Heart left ventricle (tissue), 16 donors: ENCODE measurements at regions of chr20 and their contacts with region 1.

Region 1: DNA sequence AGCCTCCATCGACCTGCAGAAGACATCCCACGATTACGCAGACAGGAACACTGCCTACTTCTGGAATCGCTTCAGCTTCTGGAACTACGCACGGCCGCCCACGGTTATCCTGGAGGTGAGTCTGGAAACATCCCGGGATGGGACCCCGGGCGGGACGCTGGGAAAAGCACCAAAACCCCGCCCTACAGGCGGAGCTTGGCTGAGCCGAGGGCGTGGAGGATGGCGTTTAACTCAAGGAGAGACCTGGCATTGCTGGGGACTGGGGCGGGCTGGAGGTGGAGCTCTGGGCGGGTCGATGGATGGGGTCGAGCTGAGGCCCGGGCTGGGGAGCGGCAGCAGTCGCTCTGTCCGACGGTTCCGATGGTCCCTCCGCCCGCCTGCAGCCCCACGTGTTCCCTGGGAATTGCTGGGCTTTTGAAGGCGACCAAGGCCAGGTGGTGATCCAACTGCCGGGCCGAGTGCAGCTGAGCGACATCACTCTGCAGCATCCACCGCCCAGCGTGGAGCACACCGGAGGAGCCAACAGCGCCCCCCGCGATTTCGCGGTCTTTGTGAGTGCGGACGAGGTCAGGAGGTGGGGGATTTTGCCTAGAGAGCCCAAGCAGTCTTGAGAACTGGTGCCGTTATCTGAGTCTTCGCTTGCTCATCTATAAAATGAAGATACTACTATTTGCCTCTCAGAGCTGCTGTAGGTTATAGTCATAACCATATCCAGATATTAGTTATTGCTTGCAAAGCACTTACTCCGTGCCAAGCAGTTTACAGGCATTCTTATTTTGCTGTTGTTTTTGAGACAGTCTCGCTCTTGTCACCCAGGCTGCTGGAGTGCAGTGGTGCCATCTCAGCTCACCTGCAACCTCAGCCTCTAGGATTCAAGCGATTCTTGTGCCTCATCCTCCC is 3.8 kb downstream of the SPAG4 start:
- DNase-seq: peak; percentile 76 to 88 (median 79)
- ATAC-seq: peak in 3 of 4 donors; percentile 28 to 51 (median 33)
- H3K4me3 ChIP-seq: peak overlapping the region; percentile 19 to 68 (median 56)
- H3K27ac ChIP-seq: peak overlapping the region in 3 of 12 donors; percentile 10 to 97 (median 88)
- H3K4me1 ChIP-seq: peaks cover 3 to 42% (median 28%) of the 10 kb centered on the region in 12 donors
- H3K27me3 ChIP-seq: no peaks in the 10 kb centered on the region
- CTCF ChIP-seq: peak in 11 of 12 donors; percentile 4 to 36 (median 18)
- POLR2A ChIP-seq: no peak

Region 2: DNA sequence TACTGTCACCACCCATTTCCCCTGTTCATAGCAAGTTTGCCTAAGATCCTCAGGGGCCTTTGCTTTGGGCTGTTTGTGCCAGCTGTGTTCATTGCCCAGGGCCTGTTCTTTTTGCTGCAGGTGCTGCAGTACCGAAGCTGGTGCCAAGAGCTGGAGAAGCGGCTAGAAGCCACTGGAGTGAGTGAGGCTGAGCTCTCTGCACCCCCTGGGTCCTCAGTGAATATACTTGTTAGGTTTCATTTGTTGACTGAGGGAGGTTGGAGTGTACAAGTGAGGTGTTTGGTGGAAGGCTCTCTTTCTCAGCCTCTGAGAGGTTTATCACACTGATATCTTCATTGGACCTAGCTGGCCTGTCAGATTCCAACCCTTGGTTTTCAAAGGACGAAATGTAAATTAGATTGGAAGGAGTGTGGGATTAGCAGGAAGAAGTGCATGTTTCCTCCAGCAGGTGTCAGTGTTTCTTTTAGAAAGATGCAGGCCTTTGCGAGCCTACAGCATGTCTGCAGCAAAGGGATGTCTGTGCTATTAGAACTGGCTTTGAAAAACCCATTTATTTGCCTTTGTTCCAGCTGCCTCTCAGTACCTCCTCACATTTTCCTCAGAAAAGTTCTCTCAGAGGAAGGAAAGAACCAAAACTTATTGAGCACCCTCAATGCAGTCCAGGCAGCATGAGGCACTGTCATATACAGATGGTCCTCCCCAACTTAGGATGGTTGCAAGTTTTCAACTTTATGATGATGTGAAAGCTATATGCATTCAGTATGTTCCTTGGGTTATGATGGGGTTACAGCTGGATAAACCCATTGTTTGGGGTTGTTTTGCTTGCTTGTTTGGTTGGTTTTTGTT is 155.8 kb before region 1 on chr20:
- intact Hi-C with region 1: loop called in 1 of 10 experiments (anchors 10 kb)
- DNase-seq: peak in 4 of 5 donors; percentile 34 to 44 (median 38)
- ATAC-seq: peak; percentile 24 to 79 (median 76)
- H3K4me3 ChIP-seq: no peak overlapping the region
- H3K27ac ChIP-seq: no peak overlapping the region
- H3K4me1 ChIP-seq: peaks cover 0 to 6% (median 0%) of the 10 kb centered on the region in 12 donors
- H3K27me3 ChIP-seq: no peaks in the 10 kb centered on the region
- CTCF ChIP-seq: peak; percentile 67 to 90 (median 78)
- POLR2A ChIP-seq: no peak

Region 3: GRCh38 chr20:35541783-35542588 is 77.5 kb before region 1 on chr20 and contains the start of gene ERGIC3:
- intact Hi-C with region 1: loop called in 1 of 10 experiments (anchors 5 kb)
- DNase-seq: peak; percentile 97 to 98 (median 98)
- ATAC-seq: peak; percentile 98 to 100 (median 100)
- H3K4me3 ChIP-seq: peak within 1 kb of the TSS; percentile 64 to 96 (median 88)
- H3K27ac ChIP-seq: peak within 1 kb of the TSS in 11 of 12 donors; percentile 23 to 83 (median 74)
- H3K4me1 ChIP-seq: peaks cover 0 to 18% (median 12%) of the 10 kb centered on the region in 12 donors
- H3K27me3 ChIP-seq: no peaks in the 10 kb centered on the region
- CTCF ChIP-seq: peak in 5 of 12 donors; percentile 10 to 42 (median 18)
- POLR2A ChIP-seq: peak in 1 of 2 donors; percentile 63
- total RNA-seq, gene ERGIC3: 83.9 to 152 (median 101) TPM

Region 4: DNA sequence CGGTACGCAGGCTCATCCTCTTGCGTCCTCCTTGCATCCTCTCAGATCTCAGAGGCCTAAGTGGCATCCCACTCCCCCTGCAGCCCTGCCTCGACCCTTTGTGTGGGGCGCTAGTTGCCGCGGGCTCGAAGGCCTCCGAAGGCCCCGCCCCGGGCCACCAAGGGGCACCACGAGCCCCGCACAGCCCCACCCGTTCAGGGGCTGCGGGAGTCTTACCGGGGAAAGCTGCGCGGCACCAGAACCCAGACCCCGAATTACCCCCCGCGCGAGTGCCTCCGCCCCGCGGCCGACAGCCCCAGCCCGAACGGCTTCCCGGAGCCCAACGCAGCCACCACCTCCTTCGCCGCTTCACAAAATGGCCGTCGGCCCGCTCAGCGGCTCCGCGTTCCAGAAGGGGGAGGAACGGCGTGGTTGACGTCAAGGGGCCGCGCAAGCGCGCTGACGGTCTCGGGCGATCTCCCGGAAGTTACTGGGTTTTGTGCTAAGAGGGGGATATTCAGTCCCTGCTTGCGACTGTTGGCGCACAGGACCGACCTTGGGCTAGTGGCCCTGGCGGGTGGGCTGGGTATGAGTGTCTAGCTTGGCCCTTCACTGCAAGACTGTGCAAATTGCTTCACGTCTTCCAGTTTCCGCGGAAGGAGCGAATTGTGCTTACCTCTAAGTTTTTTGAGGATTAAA is 45.2 kb after region 1 on chr20 and contains the starts of genes CPNE1 and RBM12:
- intact Hi-C with region 1: loop called in 9 of 10 experiments (anchors 1 to 5 kb)
- DNase-seq: peak; percentile 93 to 96 (median 94)
- ATAC-seq: peak; percentile 88 to 97 (median 96)
- H3K4me3 ChIP-seq: peak within 1 kb of the TSS; percentile 74 to 95 (median 85)
- H3K27ac ChIP-seq: peak within 1 kb of the TSS; percentile 93 to 100 (median 98)
- H3K4me1 ChIP-seq: peaks cover 2 to 45% (median 34%) of the 10 kb centered on the region in 12 donors
- H3K27me3 ChIP-seq: no peaks in the 10 kb centered on the region
- CTCF ChIP-seq: peak in 2 of 12 donors; percentile 2 to 11
- POLR2A ChIP-seq: peak; percentile 64 to 90
- total RNA-seq, gene CPNE1: 25.7 to 75.6 (median 56.1) TPM
- total RNA-seq, gene RBM12: 15.8 to 61.7 (median 44.4) TPM

Region 5: DNA sequence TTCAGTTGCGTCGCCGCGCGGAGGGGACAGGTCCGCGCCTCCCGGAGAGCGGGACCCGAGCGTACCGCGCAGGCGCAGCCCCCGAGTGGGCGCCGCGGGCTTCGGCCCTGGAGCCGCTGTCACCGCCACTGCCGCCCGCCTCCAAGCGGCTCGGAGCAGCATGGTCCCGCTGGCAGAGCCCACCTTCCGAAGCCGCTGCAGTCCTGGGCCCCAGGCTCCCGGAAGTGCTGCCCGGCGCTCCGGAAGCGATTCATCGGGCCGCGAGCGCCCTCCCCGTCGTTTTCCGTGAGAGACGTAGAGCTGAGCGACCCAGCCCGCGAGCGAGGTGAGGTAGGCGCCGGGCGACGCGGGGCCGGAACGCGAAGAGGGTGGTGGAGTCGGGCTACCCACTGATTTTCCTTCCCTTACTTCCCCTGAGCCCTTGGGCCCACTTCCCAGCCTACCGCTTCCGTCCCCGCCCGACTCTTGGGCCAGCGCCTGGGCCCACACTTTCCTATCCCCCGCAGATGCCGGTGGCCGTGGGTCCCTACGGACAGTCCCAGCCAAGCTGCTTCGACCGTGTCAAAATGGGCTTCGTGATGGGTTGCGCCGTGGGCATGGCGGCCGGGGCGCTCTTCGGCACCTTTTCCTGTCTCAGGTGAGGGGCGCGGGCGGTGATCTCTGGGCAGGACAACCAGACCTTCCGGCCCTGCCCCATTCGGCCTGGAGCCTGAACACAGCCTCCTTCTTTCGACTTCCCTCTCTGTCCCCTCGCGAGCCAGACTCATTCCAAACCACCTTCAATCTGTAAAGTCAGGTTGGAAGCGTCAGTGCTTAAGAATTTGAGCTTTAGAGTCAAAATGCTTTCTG is 79.9 kb after region 1 on chr20 and contains the starts of genes NFS1 and ROMO1:
- intact Hi-C with region 1: loop called in 1 of 10 experiments (anchors 1 kb)
- DNase-seq: peak; percentile 85 to 93 (median 89)
- ATAC-seq: peak; percentile 86 to 95 (median 94)
- H3K4me3 ChIP-seq: peak within 1 kb of the TSS; percentile 68 to 99 (median 88)
- H3K27ac ChIP-seq: peak within 1 kb of the TSS; percentile 76 to 94 (median 91)
- H3K4me1 ChIP-seq: peaks cover 4 to 29% (median 17%) of the 10 kb centered on the region in 12 donors
- H3K27me3 ChIP-seq: no peaks in the 10 kb centered on the region
- CTCF ChIP-seq: peak in 9 of 12 donors; percentile 14 to 51 (median 24)
- POLR2A ChIP-seq: peak; percentile 6 to 71
- total RNA-seq, gene NFS1: 38.1 to 67.5 (median 58.3) TPM
- total RNA-seq, gene ROMO1: 120 to 591 (median 174) TPM

Region 6: GRCh38 chr20:35741892-35742740 is 122.7 kb after region 1 on chr20 and contains the start of gene RBM39:
- intact Hi-C with region 1: loop called in 1 of 10 experiments (anchors 5 kb)
- DNase-seq: peak; percentile 100
- ATAC-seq: peak; percentile 93 to 97 (median 96)
- H3K4me3 ChIP-seq: peak within 1 kb of the TSS; percentile 62 to 91 (median 78)
- H3K27ac ChIP-seq: peak within 1 kb of the TSS; percentile 96 to 100 (median 99)
- H3K4me1 ChIP-seq: peaks cover 7 to 56% (median 34%) of the 10 kb centered on the region in 12 donors
- H3K27me3 ChIP-seq: no peaks in the 10 kb centered on the region
- CTCF ChIP-seq: peak; percentile 19 to 74 (median 46)
- POLR2A ChIP-seq: peak; percentile 73 to 86
- total RNA-seq, gene RBM39: 72.6 to 147 (median 112) TPM